ENCODE measurements at regions of chr2 and their contacts with region 1.

Region 1: DNA sequence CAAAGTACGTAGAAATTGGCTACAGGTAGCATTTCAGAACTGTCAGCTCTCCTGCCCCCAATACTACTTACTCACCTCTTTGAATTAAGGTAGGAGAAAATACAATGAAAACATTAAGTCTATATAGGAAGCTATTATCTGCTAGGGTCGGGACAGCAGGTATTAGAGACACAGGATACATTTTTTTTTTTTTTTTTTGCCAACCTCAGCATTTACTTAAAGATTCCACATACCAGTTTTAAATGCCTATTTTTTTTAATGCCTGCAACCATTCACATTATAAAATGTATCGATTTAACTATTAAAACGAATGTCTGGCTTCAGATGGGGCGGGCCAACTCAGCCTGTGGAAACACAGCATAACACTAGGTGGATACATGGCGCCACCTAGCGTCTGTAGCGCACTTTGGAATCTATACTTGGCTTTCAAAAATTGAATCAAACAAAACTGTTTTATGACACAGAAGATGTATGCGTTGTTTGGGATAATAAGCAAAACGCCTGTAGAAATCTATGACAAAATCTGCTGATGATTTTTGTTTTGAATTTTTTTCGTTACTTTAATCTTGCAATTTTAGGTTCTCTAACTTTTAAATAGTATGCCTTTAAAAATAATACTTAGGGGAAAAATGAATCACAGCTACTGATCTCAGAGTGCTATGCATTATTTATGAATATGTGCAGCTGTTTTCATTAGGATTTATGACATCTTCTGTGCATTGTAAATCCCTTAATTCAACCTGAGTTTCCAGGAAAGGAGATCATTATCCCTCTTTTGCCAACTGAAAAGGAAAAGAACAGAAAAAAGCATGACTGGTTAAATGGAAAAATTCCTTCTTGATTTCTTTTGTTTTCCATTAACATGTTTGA is 261.0 kb downstream of the NYAP2 start:
- DNase-seq: peak; percentile 48
- H3K4me3 ChIP-seq: no peak overlapping the region
- H3K27ac ChIP-seq: no peak overlapping the region
- H3K4me1 ChIP-seq: no peaks in the 10 kb centered on the region
- H3K27me3 ChIP-seq: no peaks in the 10 kb centered on the region
- CTCF ChIP-seq: peak; percentile 76 to 92

Region 2: DNA sequence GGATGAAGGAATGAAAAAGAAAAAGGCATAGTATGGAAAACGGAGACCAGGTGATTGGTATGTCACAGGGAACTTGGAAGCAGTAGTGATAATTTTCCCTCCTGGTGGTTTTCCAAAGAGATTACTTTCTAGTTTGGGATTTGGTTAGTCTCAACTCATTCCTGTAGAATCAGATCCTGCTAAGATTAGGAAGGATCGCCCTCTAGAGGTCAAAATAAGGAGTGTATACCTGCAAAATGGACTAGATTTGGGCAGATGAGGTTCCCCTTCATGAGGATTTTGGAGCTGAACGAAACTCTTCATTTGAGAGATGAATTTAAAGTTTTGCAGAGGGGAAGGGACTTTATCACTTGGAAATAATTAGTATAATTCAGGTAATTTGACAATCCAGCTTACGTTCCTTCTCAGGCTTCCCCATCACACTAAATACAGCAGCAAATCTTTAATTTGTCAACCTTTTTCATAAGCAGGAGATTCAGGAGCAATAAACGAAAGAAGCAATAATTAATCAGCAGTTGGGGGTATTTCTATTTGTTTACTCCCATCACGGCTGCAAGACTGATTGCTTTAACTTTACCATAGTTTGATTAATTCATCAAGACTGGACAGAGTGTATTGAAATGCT is 1009.6 kb before region 1 on chr2:
- CTCF ChIA-PET with region 1: no interaction called
- dilution Hi-C with region 1: no loop called
- in situ Hi-C with region 1: no loop called
- intact Hi-C with region 1: loop called (anchors 2 kb)
- DNase-seq: peak; percentile 31
- H3K4me3 ChIP-seq: no peak overlapping the region
- H3K27ac ChIP-seq: no peak overlapping the region
- H3K4me1 ChIP-seq: no peaks in the 10 kb centered on the region
- H3K27me3 ChIP-seq: no peaks in the 10 kb centered on the region
- CTCF ChIP-seq: peak; percentile 66 to 81

Region 3: GRCh38 chr2:225282858-225283710 is 377.4 kb before region 1 on chr2:
- CTCF ChIA-PET with region 1: interaction called, 9 read pairs
- dilution Hi-C with region 1: no loop called
- in situ Hi-C with region 1: no loop called
- intact Hi-C with region 1: loop called (anchors 1 kb)
- DNase-seq: peak; percentile 16
- H3K4me3 ChIP-seq: no peak overlapping the region
- H3K27ac ChIP-seq: no peak overlapping the region
- H3K4me1 ChIP-seq: no peaks in the 10 kb centered on the region
- H3K27me3 ChIP-seq: peaks cover 6% of the 10 kb centered on the region
- CTCF ChIP-seq: peak; percentile 82 to 86

Region 4: DNA sequence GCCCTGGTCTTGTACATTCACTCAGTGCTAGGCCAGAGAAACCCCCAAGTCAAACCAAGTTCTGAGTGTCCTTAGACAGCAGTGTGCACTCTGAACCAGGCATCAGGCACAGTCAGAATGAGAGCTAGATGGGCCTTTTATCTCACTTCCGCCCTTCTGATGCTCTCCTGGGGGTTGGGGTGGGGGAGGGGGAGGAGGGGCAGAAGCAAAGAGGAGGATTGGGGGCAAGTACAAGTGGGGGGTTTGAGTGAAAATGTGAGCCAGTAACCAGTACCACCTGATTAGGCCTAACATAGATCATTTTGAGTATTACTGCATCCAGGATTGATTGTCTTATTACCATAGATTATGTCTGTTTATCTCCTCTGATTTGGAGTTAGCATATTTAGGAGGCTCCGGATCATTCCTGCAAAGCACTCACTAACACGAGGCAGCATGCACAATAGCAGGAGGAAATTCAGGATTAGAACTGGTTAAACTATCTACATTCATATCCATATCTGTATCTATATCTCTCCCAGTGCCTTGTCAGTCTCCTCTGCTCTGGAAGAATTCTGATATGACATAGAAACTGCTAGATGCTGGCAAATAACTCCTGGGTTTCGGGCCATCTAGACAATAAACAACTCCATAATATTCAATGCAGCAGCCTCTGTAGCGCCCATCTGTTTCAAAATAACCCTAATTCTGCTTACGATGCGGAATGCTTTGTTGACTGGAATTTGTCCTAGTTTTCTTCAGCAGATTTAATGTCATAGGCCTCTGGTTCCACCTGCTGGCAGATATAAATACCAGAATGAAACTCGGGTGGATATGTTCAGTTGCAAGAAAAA is 1324.5 kb after region 1 on chr2:
- CTCF ChIA-PET with region 1: interaction called, 7 read pairs
- dilution Hi-C with region 1: no loop called
- in situ Hi-C with region 1: loop called (anchors 10 to 25 kb)
- intact Hi-C with region 1: no loop called
- DNase-seq: peak; percentile 34
- H3K4me3 ChIP-seq: no peak overlapping the region
- H3K27ac ChIP-seq: no peak overlapping the region
- H3K4me1 ChIP-seq: no peaks in the 10 kb centered on the region
- H3K27me3 ChIP-seq: no peaks in the 10 kb centered on the region
- CTCF ChIP-seq: peak; percentile 52 to 65

Region 5: GRCh38 chr2:227106845-227107759 is 1446.6 kb after region 1 on chr2:
- CTCF ChIA-PET with region 1: interaction called, 3 read pairs
- dilution Hi-C with region 1: no loop called
- in situ Hi-C with region 1: loop called (anchors 10 to 25 kb)
- intact Hi-C with region 1: no loop called
- DNase-seq: peak; percentile 30
- H3K4me3 ChIP-seq: no peak overlapping the region
- H3K27ac ChIP-seq: no peak overlapping the region
- H3K4me1 ChIP-seq: no peaks in the 10 kb centered on the region
- H3K27me3 ChIP-seq: peaks cover 1% of the 10 kb centered on the region
- CTCF ChIP-seq: peak; percentile 73 to 85